Activated naive CD4-positive, alpha-beta T cell treated with anti-CD3 and anti-CD28 coated beads for 36 hours (primary cell): ENCODE measurements at regions of chr16 and their contacts with region 1.

Region 1: DNA sequence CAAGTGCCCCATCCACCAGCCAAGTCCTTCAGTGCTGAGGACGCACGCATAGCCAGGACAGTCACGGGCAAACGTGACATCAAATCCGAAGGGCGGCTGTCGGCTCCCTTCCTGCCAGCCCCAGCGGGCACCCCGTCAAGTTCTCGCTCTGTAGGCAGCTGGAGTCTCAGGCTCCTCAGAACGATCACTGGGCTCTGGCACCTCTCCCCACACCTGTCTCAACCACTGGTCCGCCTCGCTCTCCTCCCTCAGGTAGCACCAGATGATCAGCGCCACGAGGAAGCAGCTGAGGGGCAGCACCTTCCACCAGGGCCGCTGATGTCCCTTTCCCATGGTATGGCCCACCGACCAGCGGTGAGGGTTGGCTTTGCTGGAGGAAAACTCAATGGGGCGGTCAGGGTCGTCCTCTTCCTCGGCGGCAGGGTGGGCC is 421 bp downstream of the UQCC4 start:
- DNase-seq: no peak
- H3K4me3 Mint-ChIP-seq: peak overlapping the region; percentile 80
- H3K27ac Mint-ChIP-seq: peak overlapping the region; percentile 70
- H3K4me1 Mint-ChIP-seq: peaks cover 33% of the 10 kb centered on the region
- H3K27me3 Mint-ChIP-seq: no peaks in the 10 kb centered on the region

Region 2: DNA sequence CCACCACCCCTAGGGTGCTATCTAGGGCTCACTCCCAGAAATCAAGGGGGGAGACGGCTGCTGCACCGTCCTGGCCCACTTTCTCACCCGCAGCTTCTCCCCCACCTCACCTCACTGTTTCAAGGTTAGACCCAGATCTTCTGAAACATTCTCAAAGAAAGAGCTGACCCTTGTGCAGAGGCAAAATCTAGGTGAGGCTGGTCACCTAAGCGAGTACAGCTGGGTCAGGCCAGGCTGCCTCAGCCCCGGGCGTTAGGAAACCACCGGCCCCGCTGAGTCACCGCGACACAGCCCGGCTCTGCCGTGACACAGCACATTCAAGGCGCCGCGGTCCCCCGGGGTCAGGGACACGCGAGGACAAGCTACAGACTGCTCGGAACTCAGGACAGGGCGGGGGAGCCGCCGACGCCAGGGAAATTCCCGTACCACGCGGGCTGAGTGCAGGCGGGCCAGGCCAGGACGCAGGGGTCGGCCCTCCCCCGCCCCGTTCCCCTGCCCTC is 41.3 kb before region 1 on chr16:
- CTCF ChIA-PET with region 1: no interaction called
- intact Hi-C with region 1: loop called (anchors 2 kb)
- DNase-seq: peak; percentile 82
- H3K4me3 Mint-ChIP-seq: peak overlapping the region; percentile 83
- H3K27ac Mint-ChIP-seq: peak overlapping the region; percentile 93
- H3K4me1 Mint-ChIP-seq: peaks cover 17% of the 10 kb centered on the region
- H3K27me3 Mint-ChIP-seq: no peaks in the 10 kb centered on the region

Region 3: GRCh38 chr16:1534021-1535020 is 114.2 kb after region 1 on chr16:
- CTCF ChIA-PET with region 1: interaction called, 3 read pairs
- intact Hi-C with region 1: loop called (anchors 2 kb)
- DNase-seq: peak; percentile 48
- H3K4me3 Mint-ChIP-seq: peak overlapping the region; percentile 97
- H3K27ac Mint-ChIP-seq: peak overlapping the region; percentile 95
- H3K4me1 Mint-ChIP-seq: peaks cover 49% of the 10 kb centered on the region
- H3K27me3 Mint-ChIP-seq: no peaks in the 10 kb centered on the region

Region 4: DNA sequence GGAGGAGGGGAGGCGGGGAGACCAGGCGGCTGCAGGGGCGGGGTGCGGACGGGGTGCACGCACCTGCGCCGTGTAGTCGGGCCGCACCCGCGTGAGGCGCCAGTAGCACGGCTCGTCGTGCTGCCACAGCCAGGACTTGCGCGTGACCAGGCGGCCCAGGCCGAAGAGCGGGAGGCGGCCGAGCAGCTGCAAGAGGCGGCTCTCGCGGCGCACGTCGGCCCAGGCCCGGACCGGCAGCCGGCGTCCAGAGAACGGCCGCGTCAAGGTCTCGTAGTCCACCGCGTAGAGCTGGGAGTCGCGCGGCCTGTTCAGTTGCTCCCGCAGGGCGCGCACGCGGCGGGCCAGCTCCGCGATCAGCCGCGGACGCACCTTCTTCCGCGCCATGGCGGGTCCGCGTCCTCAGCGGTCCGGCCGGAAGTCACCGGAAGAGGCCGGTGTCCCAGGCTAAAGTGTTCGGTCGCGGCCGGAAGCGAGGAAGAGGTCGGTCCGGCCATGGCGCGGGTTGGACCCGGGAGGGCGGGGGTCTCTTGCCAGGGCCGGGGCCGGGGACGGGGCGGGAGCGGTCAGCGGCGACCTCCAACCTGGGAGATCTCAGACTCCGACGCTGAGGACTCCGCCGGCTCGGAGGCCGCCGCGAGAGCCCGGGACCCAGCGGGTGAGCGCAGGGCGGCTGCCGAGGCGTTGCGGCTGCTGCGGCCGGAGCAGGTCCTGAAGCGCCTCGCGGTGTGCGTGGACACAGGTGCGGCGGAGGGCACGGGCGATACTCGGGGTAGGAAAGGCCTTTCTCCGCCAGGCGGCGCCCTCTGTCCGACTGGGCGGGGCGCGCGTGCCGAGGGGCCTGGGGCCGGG is 352.8 kb after region 1 on chr16 and contains the starts of genes EME2 and MRPS34:
- CTCF ChIA-PET with region 1: no interaction called
- intact Hi-C with region 1: loop called (anchors 5 kb)
- DNase-seq: peak; percentile 85
- H3K4me3 Mint-ChIP-seq: peak within 1 kb of the TSS; percentile 93
- H3K27ac Mint-ChIP-seq: peak within 1 kb of the TSS; percentile 93
- H3K4me1 Mint-ChIP-seq: peaks cover 7% of the 10 kb centered on the region
- H3K27me3 Mint-ChIP-seq: no peaks in the 10 kb centered on the region
- total RNA-seq, gene EME2: 7.7 to 7.8 TPM
- total RNA-seq, gene MRPS34: 122 to 138 TPM